Right ventricle myocardium inferior (tissue), 1 donor: ENCODE measurements at regions of chr1 and their contacts with region 1.

Region 1: GRCh38 chr1:99481391-99481996 is 164.4 kb upstream of the PALMD start:
- DNase-seq: no peak
- ATAC-seq: peak; percentile 48

Region 2: DNA sequence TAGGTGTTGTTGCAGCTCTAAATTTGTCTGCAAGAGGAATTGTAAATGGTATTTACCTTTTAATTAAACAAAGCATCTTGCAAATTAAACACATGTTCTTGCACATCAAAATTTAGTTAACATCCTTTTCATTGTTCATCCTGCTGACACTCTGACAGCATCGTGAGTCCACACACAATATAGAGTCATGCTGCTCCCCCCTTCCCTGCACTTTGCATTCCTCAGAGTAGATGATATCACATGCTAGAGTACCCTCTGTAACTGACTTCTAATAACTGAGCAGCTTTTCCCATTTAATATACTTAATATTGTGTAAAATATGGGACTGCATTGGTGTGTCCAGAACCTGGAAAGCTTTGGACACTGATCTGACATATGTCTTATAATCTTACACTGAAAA is 1421.9 kb before region 1 on chr1:
- intact Hi-C with region 1: no loop called
- DNase-seq: no peak
- ATAC-seq: no peak

Region 3: DNA sequence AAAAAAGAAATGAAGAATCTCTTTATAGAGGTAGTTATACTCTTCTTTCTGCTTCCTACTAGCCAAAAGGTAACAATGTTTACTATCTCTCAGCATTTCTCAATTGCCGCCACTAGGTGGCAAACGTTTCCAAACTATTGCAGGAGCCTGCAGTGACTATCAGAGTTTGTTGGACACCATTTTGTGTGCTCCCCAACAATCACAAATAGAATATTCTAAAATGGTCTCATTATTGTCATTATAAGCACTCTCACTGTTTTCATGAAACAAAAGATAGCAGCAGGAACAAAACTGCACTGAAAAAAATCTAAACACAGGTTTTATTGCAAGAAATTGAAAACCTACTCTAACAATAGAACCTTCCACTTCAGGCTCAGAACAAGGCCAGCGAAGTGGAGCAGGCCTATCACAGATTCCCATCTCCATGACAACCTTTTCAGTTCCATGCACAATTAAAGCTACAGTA is 301.1 kb before region 1 on chr1:
- intact Hi-C with region 1: loop called (anchors 2 kb)
- DNase-seq: no peak
- ATAC-seq: peak; percentile 89

Region 4: DNA sequence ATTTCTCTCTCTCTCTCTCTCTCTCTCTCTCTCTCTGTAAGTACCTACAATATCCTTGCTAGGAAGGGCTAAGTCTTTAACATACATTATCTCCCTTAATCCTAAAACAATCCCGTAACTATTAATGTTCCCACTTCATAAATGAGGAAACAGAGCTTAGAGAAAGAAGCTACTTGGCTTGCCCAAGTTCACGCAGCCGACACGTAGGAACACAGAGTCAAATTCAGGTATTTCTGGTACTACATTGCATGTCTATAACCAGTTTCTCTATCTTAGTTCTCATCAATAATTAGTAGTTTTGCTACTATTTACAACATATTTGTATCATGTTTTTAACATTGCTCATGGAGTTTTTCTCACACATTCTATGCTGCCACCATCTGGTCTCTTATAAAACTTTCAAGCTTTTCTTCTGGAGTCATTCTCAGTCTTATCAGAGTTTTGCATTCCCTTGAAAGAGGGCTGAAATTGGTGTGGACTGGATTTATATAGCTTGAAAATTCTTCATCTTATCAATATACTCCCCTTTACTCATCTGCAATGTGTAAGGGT is 45.5 kb after region 1 on chr1:
- intact Hi-C with region 1: loop called (anchors 5 kb)
- DNase-seq: no peak
- ATAC-seq: no peak

Region 5: DNA sequence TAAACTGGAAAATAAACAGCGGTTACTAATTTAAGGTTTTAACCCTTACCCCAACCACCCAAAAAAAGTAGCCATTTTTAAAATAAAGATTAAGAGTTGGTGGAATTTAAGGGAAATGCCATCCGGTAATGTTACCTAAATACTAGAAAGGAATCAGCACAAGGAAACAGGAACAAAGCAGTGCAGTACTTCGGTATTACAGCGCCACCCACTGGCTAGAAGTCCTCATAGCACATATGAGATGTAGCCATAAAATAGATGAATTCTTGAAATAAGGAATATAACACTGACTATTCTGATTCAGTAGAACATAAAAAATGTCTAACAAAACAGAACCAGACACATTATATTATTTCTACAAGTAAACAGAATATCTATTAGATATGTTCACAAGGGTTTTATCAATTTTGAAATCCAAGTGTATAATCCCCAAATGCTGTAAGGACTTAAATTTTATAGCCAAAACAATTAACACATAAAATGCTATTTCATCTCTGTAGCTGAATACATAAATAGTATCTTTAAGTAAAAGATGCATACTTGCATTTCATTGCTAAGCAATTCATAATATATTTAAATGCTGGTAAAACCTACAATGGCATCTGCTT is 226.1 kb after region 1 on chr1:
- intact Hi-C with region 1: loop called (anchors 2 kb)
- DNase-seq: no peak
- ATAC-seq: peak; percentile 62